Activated CD4-positive, alpha-beta T cell treated with anti-CD3 and anti-CD28 coated beads for 36 hours (primary cell): ENCODE measurements at regions of chr9 and their contacts with region 1.

Region 1: DNA sequence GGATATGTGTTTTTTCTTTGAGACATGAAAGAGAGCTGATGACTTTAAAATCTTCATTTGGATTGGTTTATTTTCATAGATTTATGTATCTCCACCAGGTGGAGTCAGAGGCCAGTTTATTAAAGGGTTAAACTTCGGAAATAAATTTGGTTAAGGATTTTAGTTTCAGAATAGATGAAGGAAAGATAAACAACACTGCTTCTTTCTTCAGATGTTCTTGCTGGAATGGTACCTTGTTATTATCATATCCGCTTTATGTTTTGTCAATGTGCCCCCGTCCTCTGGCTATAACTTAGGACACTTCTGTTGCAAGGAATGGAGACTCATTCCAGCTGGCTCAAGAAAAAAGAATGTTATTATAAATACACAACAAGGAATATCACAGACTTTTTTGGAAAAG is 81.2 kb downstream of the ALDH1A1 start:
- DNase-seq: no peak
- ATAC-seq: no peak
- H3K4me3 Mint-ChIP-seq: no peak overlapping the region
- H3K27ac Mint-ChIP-seq: no peak overlapping the region
- H3K4me1 Mint-ChIP-seq: no peaks in the 10 kb centered on the region
- H3K27me3 Mint-ChIP-seq: peaks cover 4% of the 10 kb centered on the region

Region 2: GRCh38 chr9:72997387-72997995 is 125.8 kb after region 1 on chr9:
- CTCF ChIA-PET with region 1: no interaction called
- POLR2A ChIA-PET with region 1: no interaction called
- intact Hi-C with region 1: no loop called
- DNase-seq: no peak
- ATAC-seq: no peak
- H3K4me3 Mint-ChIP-seq: no peak overlapping the region
- H3K27ac Mint-ChIP-seq: no peak overlapping the region
- H3K4me1 Mint-ChIP-seq: peaks cover 4% of the 10 kb centered on the region
- H3K27me3 Mint-ChIP-seq: peaks cover 4% of the 10 kb centered on the region

Region 3: DNA sequence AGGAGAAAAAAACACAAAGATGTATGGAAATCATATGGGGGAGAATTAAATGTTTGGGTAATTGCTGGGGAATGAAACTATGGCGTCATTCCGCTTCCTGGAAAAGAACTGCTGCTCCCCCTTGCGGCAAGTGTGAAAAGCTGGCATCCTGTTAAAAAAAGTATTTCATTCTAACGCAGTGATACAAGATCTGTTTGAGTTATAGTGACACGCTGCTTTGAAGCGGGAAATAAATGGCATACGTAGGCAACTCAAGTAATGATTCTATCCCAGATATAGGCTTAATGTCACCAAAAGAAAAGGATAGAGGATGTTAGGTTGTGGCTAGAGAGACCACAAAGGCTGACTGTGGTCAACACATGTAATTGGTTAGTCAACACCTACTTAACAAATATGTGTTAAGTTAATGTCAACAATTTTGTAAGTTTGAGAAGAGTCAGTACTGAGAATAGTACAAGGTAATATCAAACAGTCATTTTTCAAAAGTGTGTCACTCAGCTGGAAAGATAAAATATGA is 151.4 kb after region 1 on chr9:
- CTCF ChIA-PET with region 1: interaction called, 3 read pairs
- POLR2A ChIA-PET with region 1: no interaction called
- intact Hi-C with region 1: loop called (anchors 1 to 5 kb)
- DNase-seq: peak; percentile 72
- ATAC-seq: peak; percentile 74
- H3K4me3 Mint-ChIP-seq: no peak overlapping the region
- H3K27ac Mint-ChIP-seq: no peak overlapping the region
- H3K4me1 Mint-ChIP-seq: peaks cover 8% of the 10 kb centered on the region
- H3K27me3 Mint-ChIP-seq: peaks cover 11% of the 10 kb centered on the region

Region 4: DNA sequence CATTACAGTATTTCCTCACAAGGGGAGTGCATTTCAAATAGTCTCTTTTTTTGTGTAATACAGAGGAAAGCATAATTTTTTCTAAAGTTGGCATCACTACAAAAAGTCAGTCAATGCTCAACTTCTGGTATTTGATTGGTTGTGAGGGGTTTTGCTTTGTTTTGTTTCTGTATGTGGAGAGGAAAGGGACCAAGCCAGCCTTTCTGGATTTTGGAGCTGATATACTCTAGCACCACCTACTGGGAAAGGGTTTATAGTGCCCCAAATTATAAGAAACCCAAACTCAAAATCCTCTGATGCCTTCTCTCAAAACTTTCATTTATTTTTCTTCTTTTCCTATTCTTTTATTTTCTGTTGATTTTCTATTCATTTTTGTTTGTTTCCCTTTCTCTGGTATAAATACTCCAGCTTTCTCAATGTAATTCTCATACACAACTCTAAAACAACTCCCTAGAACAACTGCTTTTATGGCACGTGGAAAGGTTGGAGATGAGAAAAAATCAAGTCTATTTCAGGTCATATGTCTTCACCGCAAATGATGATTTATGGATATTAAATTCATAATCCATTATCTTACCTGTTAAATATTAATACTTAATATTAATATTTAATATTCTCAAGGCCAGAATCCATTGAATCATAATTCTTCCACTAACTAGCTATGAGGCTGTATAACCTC is 210.4 kb after region 1 on chr9:
- CTCF ChIA-PET with region 1: interaction called, 5 read pairs
- POLR2A ChIA-PET with region 1: no interaction called
- intact Hi-C with region 1: loop called (anchors 5 kb)
- DNase-seq: no peak
- ATAC-seq: no peak
- H3K4me3 Mint-ChIP-seq: no peak overlapping the region
- H3K27ac Mint-ChIP-seq: no peak overlapping the region
- H3K4me1 Mint-ChIP-seq: no peaks in the 10 kb centered on the region
- H3K27me3 Mint-ChIP-seq: peaks cover 3% of the 10 kb centered on the region

Region 5: DNA sequence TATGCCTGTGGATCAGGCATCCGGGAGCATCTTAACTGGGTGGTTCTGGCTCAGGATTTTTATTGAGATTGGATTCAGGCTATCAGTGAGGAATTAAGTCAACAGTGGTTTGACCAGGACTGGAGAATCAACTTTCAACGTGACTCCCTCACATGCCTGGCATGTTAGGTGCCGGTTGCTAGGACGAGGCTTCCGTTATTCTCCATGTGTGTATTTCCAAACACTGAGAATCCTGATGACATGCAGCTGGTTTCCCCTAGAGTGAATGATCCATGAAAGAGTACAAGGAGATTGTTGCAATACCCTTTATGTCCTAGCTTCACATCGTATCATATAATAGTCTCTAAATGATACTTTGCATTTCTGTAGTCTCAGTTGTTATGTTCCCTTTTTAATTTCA is 809.1 kb after region 1 on chr9:
- CTCF ChIA-PET with region 1: no interaction called
- POLR2A ChIA-PET with region 1: no interaction called
- intact Hi-C with region 1: no loop called
- DNase-seq: no peak
- ATAC-seq: no peak
- H3K4me3 Mint-ChIP-seq: no peak overlapping the region
- H3K27ac Mint-ChIP-seq: no peak overlapping the region
- H3K4me1 Mint-ChIP-seq: no peaks in the 10 kb centered on the region
- H3K27me3 Mint-ChIP-seq: no peaks in the 10 kb centered on the region